ENCODE measurements at regions of chr18 and their contacts with region 1.

Region 1: GRCh38 chr18:2223849-2224248 is 347.5 kb downstream of the METTL4 start:
- DNase-seq: no peak
- H3K4me3 ChIP-seq: peak overlapping the region; percentile 39
- H3K27ac ChIP-seq: no peak overlapping the region
- H3K27me3 ChIP-seq: no peaks in the 10 kb centered on the region
- CTCF ChIP-seq: peak; percentile 68

Region 2: DNA sequence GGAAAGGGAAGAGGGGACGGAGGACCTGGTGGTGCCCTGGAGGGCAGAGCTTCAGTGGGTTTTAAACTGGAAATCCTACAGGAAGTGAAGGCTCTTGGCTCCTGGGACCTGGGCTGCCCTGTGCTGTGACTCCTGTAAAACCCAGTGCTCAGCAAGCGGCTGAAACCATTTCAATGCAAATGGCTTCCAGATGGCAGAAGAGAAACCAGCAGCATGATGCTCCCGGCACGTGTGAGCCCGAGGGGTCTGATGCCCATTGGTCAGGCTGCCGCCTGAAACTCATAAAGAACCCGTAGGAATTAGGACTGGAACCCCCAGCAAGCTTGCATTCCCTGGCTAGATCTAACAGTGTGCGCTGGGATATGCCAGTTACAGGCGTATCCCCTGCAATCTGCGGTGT is 1846.8 kb before region 1 on chr18:
- CTCF ChIA-PET with region 1: no interaction called
- POLR2A ChIA-PET with region 1: no interaction called
- DNase-seq: no peak
- H3K4me3 ChIP-seq: no peak overlapping the region
- H3K27ac ChIP-seq: no peak overlapping the region
- H3K27me3 ChIP-seq: no peaks in the 10 kb centered on the region
- CTCF ChIP-seq: no peak

Region 3: DNA sequence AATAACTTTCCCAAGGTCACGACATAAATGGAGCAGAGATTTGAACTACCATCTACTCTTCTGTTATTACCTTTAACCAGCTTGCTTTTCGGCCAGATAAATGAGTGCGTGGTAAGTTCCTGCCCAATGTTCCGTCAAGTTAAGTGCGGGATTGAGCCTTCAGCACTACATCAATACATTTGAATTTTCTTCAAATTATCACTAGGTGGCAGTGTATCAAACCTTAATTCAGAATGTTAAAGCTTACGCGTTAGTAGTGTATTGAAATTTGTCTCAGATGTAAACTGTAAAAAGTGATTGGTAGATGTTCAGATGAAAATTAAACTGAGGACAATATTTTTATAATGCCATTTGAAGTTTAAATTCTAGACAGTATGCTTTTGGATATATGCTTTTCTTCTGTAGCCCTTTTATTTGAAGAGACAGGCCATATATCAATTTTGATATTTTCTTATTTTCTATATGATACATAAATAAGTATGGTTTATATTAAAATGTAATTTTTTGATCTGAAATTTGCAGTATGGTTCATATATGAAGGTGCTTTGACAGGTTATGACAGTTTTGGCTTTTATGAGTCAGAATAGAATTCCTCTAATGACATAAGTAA is 637.9 kb before region 1 on chr18:
- CTCF ChIA-PET with region 1: interaction called, 18 read pairs
- POLR2A ChIA-PET with region 1: no interaction called
- DNase-seq: no peak
- H3K4me3 ChIP-seq: no peak overlapping the region
- H3K27ac ChIP-seq: no peak overlapping the region
- H3K27me3 ChIP-seq: no peaks in the 10 kb centered on the region
- CTCF ChIP-seq: peak; percentile 40

Region 4: DNA sequence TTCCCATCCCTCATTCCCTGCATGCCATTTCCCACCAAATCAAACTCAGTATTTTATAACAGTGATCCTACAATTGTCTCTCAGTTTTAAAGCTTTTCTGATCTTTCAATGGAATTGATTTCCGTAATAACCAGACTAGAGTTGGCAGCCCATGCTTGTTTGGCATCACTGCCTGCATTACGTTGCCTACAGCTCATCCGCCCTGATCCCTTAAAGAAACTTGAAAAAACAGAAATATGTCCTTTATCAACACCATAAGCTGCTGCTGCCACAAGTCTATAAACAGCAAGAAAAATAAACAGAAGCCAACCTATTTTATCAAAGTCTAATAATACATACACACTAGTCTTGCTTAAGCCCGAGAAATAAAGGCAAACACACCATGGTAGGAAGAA is 16.5 kb after region 1 on chr18:
- CTCF ChIA-PET with region 1: interaction called, 16 read pairs
- POLR2A ChIA-PET with region 1: interaction called, 4 read pairs
- DNase-seq: peak; percentile 48
- H3K4me3 ChIP-seq: peak overlapping the region; percentile 1; the same call in 1 of the 2 replicates
- H3K27ac ChIP-seq: peak overlapping the region; percentile 65
- H3K27me3 ChIP-seq: no peaks in the 10 kb centered on the region
- CTCF ChIP-seq: no peak

Region 5: DNA sequence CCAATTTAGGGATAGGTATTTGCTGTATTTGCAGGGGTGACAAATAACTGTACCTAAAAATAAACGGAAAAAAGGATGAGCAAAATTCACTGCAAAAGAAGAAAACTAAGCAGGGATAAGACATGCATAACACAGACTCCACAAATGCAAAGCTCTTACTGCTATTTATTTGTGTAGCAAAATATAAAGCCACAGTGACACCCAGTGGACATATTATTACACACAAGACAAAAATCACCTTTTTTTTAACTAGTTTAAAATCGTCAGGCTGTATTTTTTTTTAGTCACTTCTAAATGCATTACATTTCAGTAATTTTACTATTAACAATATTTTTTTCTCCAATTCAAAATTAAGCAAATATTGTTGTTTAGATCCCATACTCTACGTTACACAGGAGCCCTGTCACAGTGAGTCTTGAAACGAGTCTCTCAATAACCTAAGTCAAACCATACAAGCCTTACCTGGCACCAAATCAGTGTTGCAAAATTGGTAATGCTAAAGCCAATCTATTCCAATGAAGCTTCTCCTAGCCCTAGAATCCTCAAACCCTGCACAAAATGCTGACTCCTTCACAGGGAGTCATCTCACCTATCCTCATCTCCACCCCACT is 323.7 kb after region 1 on chr18:
- CTCF ChIA-PET with region 1: interaction called, 26 read pairs
- POLR2A ChIA-PET with region 1: no interaction called
- DNase-seq: peak; percentile 36
- H3K4me3 ChIP-seq: no peak overlapping the region
- H3K27ac ChIP-seq: no peak overlapping the region
- H3K27me3 ChIP-seq: no peaks in the 10 kb centered on the region
- CTCF ChIP-seq: peak; percentile 58